Motor neuron (in vitro differentiated cells): ENCODE measurements at regions of chr17 and their contacts with region 1.

Region 1: GRCh38 chr17:72120642-72121163 is at the start of gene SOX9:
- ATAC-seq: peak; percentile 69 to 88 (median 78)
- H3K4me3 ChIP-seq: peak within 1 kb of the TSS; percentile 44 to 54 (median 48)
- H3K27ac ChIP-seq: no peak within 1 kb of the TSS
- H3K4me1 ChIP-seq: peaks cover 33 to 42% of the 10 kb centered on the region in 2 donors
- total RNA-seq, gene SOX9: 1.8 to 108 (median 17.3) TPM

Region 2: GRCh38 chr17:70767102-70767701 is 1353.5 kb before region 1 on chr17:
- in situ Hi-C with region 1: loop called in 3 of 9 experiments (anchors 25 kb)
- ATAC-seq: no peak
- H3K4me3 ChIP-seq: no peak overlapping the region
- H3K27ac ChIP-seq: no peak overlapping the region
- H3K4me1 ChIP-seq: peaks cover 12 to 13% of the 10 kb centered on the region in 2 donors

Region 3: DNA sequence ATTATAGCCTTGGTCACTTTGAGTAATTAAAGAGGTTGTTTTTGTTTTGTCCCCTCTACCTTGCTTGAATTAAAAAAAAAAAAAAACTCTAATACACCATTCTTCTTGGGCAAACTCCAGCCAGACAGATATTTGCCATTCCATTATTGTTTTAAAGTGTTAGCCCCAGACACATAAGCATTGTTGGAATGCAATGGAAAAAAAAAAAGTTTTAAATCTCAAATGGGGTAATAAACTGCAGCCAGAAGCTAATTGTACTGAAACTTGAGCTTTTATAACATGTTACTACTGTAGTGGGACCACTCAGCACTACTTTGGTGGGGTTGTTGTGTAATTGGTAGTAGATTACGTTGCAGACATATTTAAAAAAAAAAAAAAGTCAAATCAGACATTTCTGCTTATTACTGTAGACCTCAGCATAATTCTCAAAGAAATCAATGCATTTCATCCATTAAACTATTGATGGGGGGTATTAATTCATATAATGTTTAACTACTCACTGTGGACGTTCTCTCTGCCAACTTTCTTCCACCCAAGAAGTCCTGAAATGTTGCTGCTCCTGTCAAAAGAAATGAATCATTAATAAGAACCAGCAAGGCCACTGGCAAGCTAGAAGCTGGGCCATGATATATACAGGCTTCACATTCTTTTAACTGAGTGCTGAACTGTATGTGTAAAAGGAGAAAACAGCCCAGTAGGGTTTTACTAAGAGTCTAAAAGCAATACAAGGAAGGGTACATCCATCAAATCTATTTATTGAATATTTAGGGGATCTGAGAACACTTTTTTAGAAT is 626.4 kb before region 1 on chr17:
- in situ Hi-C with region 1: loop called in 1 of 9 experiments (anchors 25 kb)
- ATAC-seq: no peak
- H3K4me3 ChIP-seq: no peak overlapping the region
- H3K27ac ChIP-seq: no peak overlapping the region
- H3K4me1 ChIP-seq: no peaks in the 10 kb centered on the region

Region 4: DNA sequence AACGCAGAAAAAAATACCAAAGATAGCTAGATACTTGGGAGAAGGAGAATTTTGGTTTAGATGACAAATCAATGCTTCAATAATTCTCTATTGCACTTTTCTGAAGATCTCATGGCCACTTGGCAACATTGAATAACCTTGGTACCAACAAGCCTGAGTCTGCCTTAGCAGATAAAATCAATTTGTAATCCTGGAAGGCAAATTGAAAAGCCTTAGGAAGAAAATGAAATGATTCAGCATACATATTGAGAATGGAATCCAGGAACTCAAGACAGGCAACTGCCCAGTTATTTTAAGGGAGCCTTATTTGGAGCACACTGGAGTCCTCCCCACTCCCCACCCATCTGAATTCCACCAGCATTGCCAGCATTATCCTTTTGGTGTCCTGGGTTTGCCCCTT is 109.1 kb before region 1 on chr17:
- in situ Hi-C with region 1: no loop called
- ATAC-seq: no peak
- H3K4me3 ChIP-seq: no peak overlapping the region
- H3K27ac ChIP-seq: no peak overlapping the region
- H3K4me1 ChIP-seq: no peaks in the 10 kb centered on the region